Activated B cell treated with CpG ODN at 0.5 μM for 24 hours (primary cell): ENCODE measurements at regions of chr2 and their contacts with region 1.

Region 1: GRCh38 chr2:151051574-151052220 is 210.0 kb downstream of the RBM43 start:
- DNase-seq: no peak
- ATAC-seq: peak; percentile 71
- H3K4me3 Mint-ChIP-seq: no peak overlapping the region
- H3K27ac Mint-ChIP-seq: no peak overlapping the region
- H3K4me1 Mint-ChIP-seq: no peaks in the 10 kb centered on the region
- H3K27me3 Mint-ChIP-seq: no peaks in the 10 kb centered on the region
- CTCF ChIP-seq: no peak

Region 2: GRCh38 chr2:151189125-151189524 is 137.4 kb after region 1 on chr2:
- CTCF ChIA-PET with region 1: no interaction called
- POLR2A ChIA-PET with region 1: no interaction called
- intact Hi-C with region 1: no loop called
- DNase-seq: no peak
- ATAC-seq: no peak
- H3K4me3 Mint-ChIP-seq: no peak overlapping the region
- H3K27ac Mint-ChIP-seq: no peak overlapping the region
- H3K4me1 Mint-ChIP-seq: no peaks in the 10 kb centered on the region
- H3K27me3 Mint-ChIP-seq: peaks cover 2% of the 10 kb centered on the region
- CTCF ChIP-seq: no peak

Region 3: GRCh38 chr2:151238527-151239487 is 187.1 kb after region 1 on chr2:
- CTCF ChIA-PET with region 1: no interaction called
- POLR2A ChIA-PET with region 1: no interaction called
- intact Hi-C with region 1: loop called (anchors 5 kb)
- DNase-seq: no peak
- ATAC-seq: peak; percentile 72
- H3K4me3 Mint-ChIP-seq: no peak overlapping the region
- H3K27ac Mint-ChIP-seq: no peak overlapping the region
- H3K4me1 Mint-ChIP-seq: no peaks in the 10 kb centered on the region
- H3K27me3 Mint-ChIP-seq: peaks cover 6% of the 10 kb centered on the region
- CTCF ChIP-seq: no peak